BJ (cell line): ENCODE measurements at regions of chr19 and their contacts with region 1.

Region 1: GRCh38 chr19:17496337-17496997 is 15.0 kb upstream of the PGLS start:
- DNase-seq: no peak
- H3K4me3 ChIP-seq: no peak overlapping the region
- H3K27me3 ChIP-seq: no peaks in the 10 kb centered on the region
- CTCF ChIP-seq: peak; percentile 91

Region 2: DNA sequence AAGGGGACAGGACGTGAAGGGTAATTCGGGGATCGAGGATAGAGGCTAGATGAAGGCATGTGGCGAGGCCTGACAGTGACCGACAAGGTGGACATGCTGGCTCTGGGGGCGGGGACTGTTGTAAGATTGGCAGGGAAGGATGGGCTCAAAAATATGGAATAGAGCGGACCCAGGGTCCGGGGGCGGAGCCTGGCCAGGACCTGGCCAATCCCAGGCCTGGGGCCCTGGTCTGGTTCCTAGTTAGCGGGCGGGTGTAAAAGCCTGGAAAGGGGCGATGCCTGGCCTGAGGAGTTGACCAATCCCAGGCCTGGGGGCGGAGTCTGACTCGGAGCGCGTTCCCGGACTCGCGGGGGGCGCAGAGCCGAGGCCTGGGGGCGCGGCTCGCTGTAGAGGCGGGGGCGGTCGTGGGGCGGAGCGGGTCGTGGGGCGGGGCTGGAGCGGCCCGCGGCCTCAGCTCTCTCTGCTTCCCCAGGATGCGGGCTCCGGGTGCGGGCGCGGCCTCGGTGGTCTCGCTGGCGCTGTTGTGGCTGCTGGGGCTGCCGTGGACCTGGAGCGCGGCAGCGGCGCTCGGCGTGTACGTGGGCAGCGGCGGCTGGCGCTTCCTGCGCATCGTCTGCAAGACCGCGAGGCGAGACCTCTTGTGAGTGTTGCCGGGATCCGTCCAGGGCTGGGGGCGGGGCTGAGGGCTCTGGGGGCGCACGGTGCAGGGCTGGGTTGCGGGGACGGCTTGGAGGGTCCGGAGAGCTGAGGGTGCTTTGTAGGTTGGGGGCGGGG is 26.2 kb before region 1 on chr19 and contains the start of gene SLC27A1:
- CTCF ChIA-PET with region 1: interaction called, 17 read pairs
- POLR2A ChIA-PET with region 1: no interaction called
- DNase-seq: peak; percentile 97
- H3K4me3 ChIP-seq: peak within 1 kb of the TSS; percentile 91
- H3K27me3 ChIP-seq: no peaks in the 10 kb centered on the region
- CTCF ChIP-seq: no peak
- polyA plus RNA-seq, gene SLC27A1: 12.0 and 18.8 TPM in 2 replicates

Region 3: GRCh38 chr19:17479325-17479791 is 17.1 kb before region 1 on chr19:
- CTCF ChIA-PET with region 1: interaction called, 14 read pairs
- POLR2A ChIA-PET with region 1: no interaction called
- DNase-seq: no peak
- H3K4me3 ChIP-seq: no peak overlapping the region
- H3K27me3 ChIP-seq: no peaks in the 10 kb centered on the region
- CTCF ChIP-seq: no peak

Region 4: DNA sequence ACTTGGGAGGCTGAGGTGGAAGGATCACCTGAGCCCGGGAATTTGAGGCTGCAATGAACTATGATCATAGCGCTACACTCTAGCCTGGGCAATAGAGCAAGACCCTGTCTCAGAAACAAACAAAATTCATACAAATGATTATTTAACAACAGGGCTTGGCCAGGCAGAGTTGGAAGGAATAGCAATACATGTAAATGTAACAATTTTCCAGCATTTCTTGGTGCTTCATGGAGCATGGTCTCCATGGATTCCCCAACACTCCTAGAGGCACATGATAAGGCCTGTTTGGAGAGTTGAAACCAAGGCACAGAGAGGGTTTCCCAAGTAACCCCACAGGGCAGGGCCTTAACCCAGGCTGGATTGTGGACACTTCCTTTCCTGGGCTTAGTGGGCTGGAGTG is 314.6 kb after region 1 on chr19:
- CTCF ChIA-PET with region 1: no interaction called
- POLR2A ChIA-PET with region 1: no interaction called
- DNase-seq: no peak
- H3K4me3 ChIP-seq: no peak overlapping the region
- H3K27me3 ChIP-seq: peaks cover 2% of the 10 kb centered on the region; the same call in 1 of the 2 replicates
- CTCF ChIP-seq: no peak